ENCODE measurements at regions of chr7 and their contacts with region 1.

Region 1: DNA sequence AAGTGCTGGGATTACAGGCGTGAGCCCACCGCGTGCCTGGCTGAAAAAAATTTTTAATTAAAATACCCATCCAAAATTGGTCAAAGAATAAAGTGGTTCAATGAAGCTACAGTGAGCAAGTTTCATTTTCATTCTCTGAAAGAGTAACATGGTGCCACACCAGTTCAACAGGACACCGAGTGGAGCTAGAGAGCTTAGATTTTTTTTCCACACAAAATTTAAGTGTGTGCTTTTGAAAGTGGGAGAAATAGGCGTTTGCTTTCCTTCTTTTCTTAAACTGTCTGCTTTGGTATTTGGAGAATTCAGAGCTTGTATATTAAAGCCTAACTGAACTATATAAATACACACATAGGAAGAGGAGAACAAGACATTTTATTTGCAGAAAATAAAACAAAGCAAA is 43.4 kb downstream of the BPGM start:
- DNase-seq: peak; percentile 13
- H3K4me3 Mint-ChIP-seq: no peak overlapping the region
- H3K27ac Mint-ChIP-seq: no peak overlapping the region
- H3K4me1 Mint-ChIP-seq: peaks cover 14% of the 10 kb centered on the region
- H3K27me3 Mint-ChIP-seq: no peaks in the 10 kb centered on the region

Region 2: GRCh38 chr7:134755401-134756022 is 65.5 kb after region 1 on chr7:
- CTCF ChIA-PET with region 1: interaction called, 18 read pairs
- intact Hi-C with region 1: loop called (anchors 1 kb)
- DNase-seq: peak; percentile 75
- H3K4me3 Mint-ChIP-seq: no peak overlapping the region
- H3K27ac Mint-ChIP-seq: no peak overlapping the region
- H3K4me1 Mint-ChIP-seq: no peaks in the 10 kb centered on the region
- H3K27me3 Mint-ChIP-seq: no peaks in the 10 kb centered on the region

Region 3: GRCh38 chr7:134845468-134845867 is 155.5 kb after region 1 on chr7:
- CTCF ChIA-PET with region 1: no interaction called
- intact Hi-C with region 1: loop called (anchors 2 kb)
- DNase-seq: peak; percentile 37
- H3K4me3 Mint-ChIP-seq: no peak overlapping the region
- H3K27ac Mint-ChIP-seq: peak overlapping the region; percentile 65
- H3K4me1 Mint-ChIP-seq: peaks cover 24% of the 10 kb centered on the region
- H3K27me3 Mint-ChIP-seq: no peaks in the 10 kb centered on the region

Region 4: GRCh38 chr7:134954197-134955082 is 264.4 kb after region 1 on chr7:
- CTCF ChIA-PET with region 1: interaction called, 3 read pairs
- intact Hi-C with region 1: loop called (anchors 1 kb)
- DNase-seq: no peak
- H3K4me3 Mint-ChIP-seq: no peak overlapping the region
- H3K27ac Mint-ChIP-seq: no peak overlapping the region
- H3K4me1 Mint-ChIP-seq: no peaks in the 10 kb centered on the region
- H3K27me3 Mint-ChIP-seq: no peaks in the 10 kb centered on the region

Measured in activated naive CD4-positive, alpha-beta T cell treated with anti-CD3 and anti-CD28 coated beads for 36 hours (primary cell).